ENCODE measurements at regions of chr14 and their contacts with region 1.

Region 1: GRCh38 chr14:21557084-21557901 is 22.6 kb downstream of the OR10G3 start:
- DNase-seq: peak in 1 of 2 donors; percentile 90
- H3K4me3 ChIP-seq: peak overlapping the region; percentile 48 to 57
- H3K27ac ChIP-seq: peak overlapping the region; percentile 34 to 41
- H3K4me1 ChIP-seq: peaks cover 0 to 3% of the 10 kb centered on the region in 2 donors
- H3K27me3 ChIP-seq: no peaks in the 10 kb centered on the region
- CTCF ChIP-seq: peak; percentile 61 to 67 (median 64)

Region 2: GRCh38 chr14:21437063-21437901 is 120.0 kb before region 1 on chr14:
- intact Hi-C with region 1: loop called (anchors 1 kb)
- DNase-seq: peak; percentile 95 to 99
- H3K4me3 ChIP-seq: peak overlapping the region; percentile 73 to 89
- H3K27ac ChIP-seq: peak overlapping the region; percentile 86 to 89
- H3K4me1 ChIP-seq: peaks cover 8 to 15% of the 10 kb centered on the region in 2 donors
- H3K27me3 ChIP-seq: no peaks in the 10 kb centered on the region
- CTCF ChIP-seq: no peak

Region 3: GRCh38 chr14:21498553-21499526 is 58.5 kb before region 1 on chr14:
- intact Hi-C with region 1: loop called (anchors 1 kb)
- DNase-seq: no peak
- H3K4me3 ChIP-seq: no peak overlapping the region
- H3K27ac ChIP-seq: no peak overlapping the region
- H3K4me1 ChIP-seq: no peaks in the 10 kb centered on the region
- H3K27me3 ChIP-seq: no peaks in the 10 kb centered on the region
- CTCF ChIP-seq: peak; percentile 5 to 48 (median 23)

Measured in ascending aorta (tissue), 2 donors.